ENCODE measurements at regions of chr20 and their contacts with region 1.

Region 1: GRCh38 chr20:50286609-50287008 is 96.0 kb downstream of the CEBPB start:
- DNase-seq: peak; percentile 86 to 95
- ATAC-seq: peak; percentile 62 to 86
- H3K4me3 ChIP-seq: 0 out of 3 replicates have a peak overlapping the region, but pooled peaks have one; percentile 4
- H3K27ac ChIP-seq: peak overlapping the region; percentile 96
- H3K4me1 ChIP-seq: peaks cover 73% of the 10 kb centered on the region
- CTCF ChIP-seq: no peak
- EP300 ChIP-seq: no peak
- POLR2A ChIP-seq: no peak
- RAD21 ChIP-seq: 0 out of 5 replicates have a peak, but pooled peaks of 1 of the 2 experiments have one; percentile 14

Region 2: GRCh38 chr20:50273618-50274491 is 12.8 kb before region 1 on chr20:
- CTCF ChIA-PET with region 1: interaction called, 13 read pairs
- POLR2A ChIA-PET with region 1: no interaction called
- DNase-seq: peak in 1 of 2 experiments; percentile 47
- ATAC-seq: peak; percentile 9 to 28; a peak in 3 of 6 replicates
- H3K4me3 ChIP-seq: no peak overlapping the region
- H3K27ac ChIP-seq: peak overlapping the region; percentile 58 to 96
- H3K4me1 ChIP-seq: peaks cover 30% of the 10 kb centered on the region
- CTCF ChIP-seq: no peak
- EP300 ChIP-seq: no peak
- POLR2A ChIP-seq: no peak
- RAD21 ChIP-seq: peak; percentile 13 to 32; a peak in 1 of 5 replicates